Breast epithelium (tissue), 4 donors: ENCODE measurements at regions of chr7 and their contacts with region 1.

Region 1: DNA sequence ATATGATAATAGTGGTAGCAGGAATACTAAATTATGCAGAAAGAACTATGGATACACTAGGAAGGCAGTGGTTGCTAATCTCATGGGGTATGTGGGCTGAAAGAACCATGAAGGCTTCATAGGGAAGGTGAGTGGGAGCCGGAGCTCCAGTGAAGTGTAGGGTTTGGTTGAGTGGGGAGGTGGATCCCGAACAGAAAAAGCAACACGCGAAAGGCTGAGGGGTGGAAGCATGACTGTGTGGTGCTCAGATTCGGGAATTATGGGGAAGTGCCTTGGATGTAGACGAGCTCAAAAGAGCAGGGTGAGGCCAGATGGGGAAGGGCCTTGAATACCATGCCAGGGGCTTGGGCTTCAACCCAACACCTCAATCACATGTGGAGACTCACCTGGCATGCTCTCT is 715.1 kb downstream of the TYW1 start:
- DNase-seq: no peak
- H3K4me3 ChIP-seq: no peak overlapping the region
- H3K27ac ChIP-seq: no peak overlapping the region
- H3K4me1 ChIP-seq: no peaks in the 10 kb centered on the region
- H3K27me3 ChIP-seq: no peaks in the 10 kb centered on the region
- CTCF ChIP-seq: no peak
- POLR2A ChIP-seq: no peak

Region 2: GRCh38 chr7:67732898-67733423 is 21.3 kb after region 1 on chr7:
- intact Hi-C with region 1: loop called (anchors 1 kb)
- DNase-seq: no peak
- H3K4me3 ChIP-seq: no peak overlapping the region
- H3K27ac ChIP-seq: no peak overlapping the region
- H3K4me1 ChIP-seq: no peaks in the 10 kb centered on the region
- H3K27me3 ChIP-seq: no peaks in the 10 kb centered on the region
- CTCF ChIP-seq: no peak
- POLR2A ChIP-seq: no peak